ENCODE measurements at regions of chr22 and their contacts with region 1.

Region 1: DNA sequence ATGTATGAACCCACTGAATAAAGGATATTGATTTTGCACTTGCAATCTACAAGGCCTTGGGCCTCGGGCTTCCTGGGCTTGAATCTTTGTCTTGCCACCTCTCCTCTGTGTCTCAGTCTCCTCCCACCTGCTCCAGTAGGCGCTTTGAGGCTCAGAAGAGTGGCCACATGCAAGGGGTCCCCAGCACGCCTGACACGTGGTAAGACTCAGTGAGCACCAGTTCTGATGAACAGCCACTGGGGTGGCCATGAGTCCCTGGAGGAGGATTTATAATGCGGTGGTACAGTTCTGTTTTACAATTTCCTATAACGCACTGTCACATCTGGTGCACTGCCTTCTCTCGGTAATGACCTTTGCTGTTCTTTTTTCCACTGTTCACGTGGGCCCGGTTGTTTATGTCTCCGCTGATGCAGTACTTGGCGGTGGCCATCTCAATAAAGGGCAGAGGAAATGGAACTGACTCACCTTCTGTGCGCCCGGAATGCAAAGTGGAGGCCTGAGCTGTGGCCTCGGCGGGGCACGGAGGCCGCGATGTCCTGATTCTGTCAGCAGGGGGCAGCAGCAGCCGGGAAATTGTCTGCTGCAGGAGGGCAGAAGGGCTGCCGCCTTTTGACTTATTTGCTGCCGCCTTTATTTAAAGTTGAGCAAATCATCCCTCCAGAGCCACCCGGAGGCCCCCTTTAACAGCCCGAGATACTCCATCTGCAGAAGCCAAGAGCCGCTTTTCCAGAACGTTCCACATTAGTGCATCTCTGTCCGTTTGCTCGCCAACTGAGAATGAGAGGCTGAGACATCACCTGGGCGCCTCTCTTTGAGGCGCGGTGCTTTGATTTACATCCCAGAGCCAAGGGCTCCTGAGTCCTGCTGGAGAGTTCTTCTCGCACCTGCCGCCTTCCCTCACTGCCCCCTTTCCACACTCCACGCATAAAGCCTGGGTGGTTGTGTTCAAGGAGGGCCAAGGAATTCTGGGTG is 6.0 kb upstream of the IFT27 start:
- DNase-seq: peak; percentile 80 to 91 (median 86)
- ATAC-seq: peak; percentile 98
- H3K4me3 ChIP-seq: no peak overlapping the region
- H3K4me1 ChIP-seq: peaks cover 5% of the 10 kb centered on the region
- CTCF ChIP-seq: peak; percentile 81

Region 2: DNA sequence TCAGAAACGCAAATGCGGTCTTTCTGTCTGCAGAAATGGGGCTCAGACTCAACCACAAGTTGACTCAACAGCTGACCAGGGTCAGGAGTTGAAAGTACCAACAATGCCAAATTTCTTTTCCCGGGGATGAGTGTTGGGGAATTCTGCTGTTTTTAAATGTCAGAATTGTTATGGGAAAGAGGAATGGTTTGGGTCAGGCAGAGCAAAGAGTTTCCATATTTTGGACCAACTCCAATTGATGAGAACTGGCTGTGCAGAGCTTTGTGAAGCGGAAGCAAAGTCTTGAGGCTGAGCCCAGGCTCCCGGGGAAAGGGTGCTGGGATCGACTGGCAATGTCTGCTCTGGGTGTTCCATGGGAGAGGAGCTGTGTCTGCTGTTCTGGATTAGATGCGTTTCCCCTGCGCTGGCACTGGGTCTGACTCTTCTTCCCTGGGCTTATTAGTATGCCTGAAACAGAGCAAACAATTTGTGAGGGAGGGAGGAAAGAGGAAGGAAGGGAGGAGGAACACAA is 336.7 kb before region 1 on chr22:
- intact Hi-C with region 1: no loop called
- DNase-seq: peak in 1 of 3 donors; percentile 45
- ATAC-seq: peak; percentile 8
- H3K4me3 ChIP-seq: no peak overlapping the region
- H3K4me1 ChIP-seq: peaks cover 10% of the 10 kb centered on the region
- CTCF ChIP-seq: no peak

Region 3: DNA sequence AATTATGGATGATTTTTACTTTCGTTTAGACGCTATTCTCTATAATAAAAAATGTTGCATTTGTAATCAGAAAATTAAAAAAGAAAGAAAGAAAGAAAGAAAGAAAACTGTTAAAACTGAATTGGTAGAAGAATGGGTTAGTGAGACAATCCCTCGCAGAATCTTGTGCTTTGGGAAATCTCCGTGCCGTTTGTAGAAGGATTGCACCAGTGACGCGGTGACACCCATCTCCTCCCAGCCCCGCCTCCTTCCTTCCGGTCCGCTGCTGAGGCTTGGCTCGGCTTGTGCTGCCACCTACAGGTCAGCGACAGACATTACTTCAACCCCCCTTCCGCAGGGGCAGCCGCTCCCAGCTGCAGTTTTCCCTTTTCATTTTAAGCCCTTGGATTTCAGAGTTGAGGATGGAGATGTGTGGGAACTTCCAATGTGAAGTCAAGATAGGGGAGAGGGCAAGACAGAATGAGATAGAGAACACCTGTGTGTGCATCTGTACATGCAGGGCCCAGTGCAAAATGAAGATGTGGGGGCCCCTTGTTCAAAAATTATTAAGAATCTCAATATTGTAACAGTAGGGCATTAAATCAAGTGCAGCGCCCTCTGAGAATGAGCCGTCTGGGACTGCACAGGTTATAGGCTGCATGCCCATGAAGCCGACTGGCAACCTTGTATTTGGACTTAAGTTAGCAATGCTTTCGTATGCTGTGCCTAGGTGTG is 196.2 kb after region 1 on chr22:
- intact Hi-C with region 1: loop called (anchors 10 kb)
- DNase-seq: peak; percentile 93 to 94 (median 93)
- ATAC-seq: peak; percentile 99
- H3K4me3 ChIP-seq: no peak overlapping the region
- H3K4me1 ChIP-seq: no peaks in the 10 kb centered on the region
- CTCF ChIP-seq: peak; percentile 89